A549 (cell line): ENCODE measurements at regions of chr7 and their contacts with region 1.

Region 1: GRCh38 chr7:73828107-73828803 is 2.5 kb upstream of the CLDN4 start:
- DNase-seq: peak; percentile 67 to 86
- ATAC-seq: peak; percentile 76 to 79
- H3K4me3 ChIP-seq: no peak overlapping the region
- H3K27ac ChIP-seq: peak overlapping the region; percentile 67 to 86
- H3K4me1 ChIP-seq: peaks cover 65% of the 10 kb centered on the region
- CTCF ChIP-seq: no peak
- EP300 ChIP-seq: no peak
- POLR2A ChIP-seq: no peak
- RAD21 ChIP-seq: no peak

Region 2: DNA sequence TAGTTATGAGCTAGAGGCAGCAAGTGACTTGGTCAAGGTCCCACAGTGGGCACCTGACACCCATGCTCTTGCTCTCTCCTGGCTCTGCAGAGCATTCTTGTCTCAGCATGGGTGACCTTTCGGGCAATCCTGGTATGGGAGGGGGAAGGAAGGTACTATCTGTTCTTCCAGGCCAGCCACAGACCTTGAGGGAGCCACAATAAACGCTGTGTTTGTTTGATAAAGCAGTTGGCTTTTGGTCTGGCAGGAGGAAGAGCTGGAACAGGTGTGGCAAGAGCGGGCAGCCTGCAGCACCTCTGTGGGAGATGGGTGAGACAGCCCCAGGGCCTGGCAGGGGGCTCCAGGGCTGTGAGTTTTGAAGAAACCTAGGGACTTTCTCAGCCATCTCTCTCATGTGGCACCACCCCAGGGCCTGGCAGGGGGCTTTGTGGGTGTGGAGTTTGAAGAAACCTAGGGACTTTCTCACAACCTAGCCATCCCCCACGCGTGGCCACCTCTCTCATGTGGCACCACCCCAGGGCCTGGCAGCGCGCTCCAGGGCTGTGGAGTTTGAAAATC is 69.6 kb before region 1 on chr7:
- CTCF ChIA-PET with region 1: no interaction called
- POLR2A ChIA-PET with region 1: no interaction called
- DNase-seq: no peak
- ATAC-seq: peak in 1 of 2 experiments; percentile 19; a peak in 2 of 6 replicates
- H3K4me3 ChIP-seq: no peak overlapping the region
- H3K27ac ChIP-seq: no peak overlapping the region
- H3K4me1 ChIP-seq: peaks cover 10% of the 10 kb centered on the region
- CTCF ChIP-seq: no peak
- EP300 ChIP-seq: no peak
- POLR2A ChIP-seq: no peak
- RAD21 ChIP-seq: no peak

Region 3: DNA sequence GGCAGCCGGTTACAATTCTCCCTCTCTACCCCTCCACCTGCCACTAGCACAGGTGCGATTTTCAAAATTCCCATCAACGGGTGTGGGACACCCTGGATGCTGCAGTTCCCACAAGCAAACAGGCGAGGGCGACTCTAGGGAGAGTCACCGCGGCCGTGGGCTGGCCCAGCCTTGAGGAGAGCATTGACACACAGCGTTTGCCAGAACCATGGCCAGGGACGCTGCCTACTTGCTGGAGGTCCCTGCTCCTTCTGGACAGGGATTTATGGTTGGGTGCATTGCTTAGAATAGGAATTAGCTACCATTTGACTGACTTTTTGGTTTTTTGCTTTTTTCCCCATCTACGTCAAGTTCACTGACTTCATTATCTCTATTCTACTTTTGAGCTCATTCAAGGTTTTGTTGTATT is 16.5 kb before region 1 on chr7:
- CTCF ChIA-PET with region 1: interaction called, 28 read pairs
- POLR2A ChIA-PET with region 1: no interaction called
- DNase-seq: peak; percentile 67 to 72
- ATAC-seq: peak; percentile 93 to 97
- H3K4me3 ChIP-seq: no peak overlapping the region
- H3K27ac ChIP-seq: no peak overlapping the region
- H3K4me1 ChIP-seq: peaks cover 7% of the 10 kb centered on the region; the same call in 2 of the 3 replicates
- CTCF ChIP-seq: peak; percentile 59
- EP300 ChIP-seq: no peak
- POLR2A ChIP-seq: no peak
- RAD21 ChIP-seq: peak; percentile 63 to 72

Region 4: DNA sequence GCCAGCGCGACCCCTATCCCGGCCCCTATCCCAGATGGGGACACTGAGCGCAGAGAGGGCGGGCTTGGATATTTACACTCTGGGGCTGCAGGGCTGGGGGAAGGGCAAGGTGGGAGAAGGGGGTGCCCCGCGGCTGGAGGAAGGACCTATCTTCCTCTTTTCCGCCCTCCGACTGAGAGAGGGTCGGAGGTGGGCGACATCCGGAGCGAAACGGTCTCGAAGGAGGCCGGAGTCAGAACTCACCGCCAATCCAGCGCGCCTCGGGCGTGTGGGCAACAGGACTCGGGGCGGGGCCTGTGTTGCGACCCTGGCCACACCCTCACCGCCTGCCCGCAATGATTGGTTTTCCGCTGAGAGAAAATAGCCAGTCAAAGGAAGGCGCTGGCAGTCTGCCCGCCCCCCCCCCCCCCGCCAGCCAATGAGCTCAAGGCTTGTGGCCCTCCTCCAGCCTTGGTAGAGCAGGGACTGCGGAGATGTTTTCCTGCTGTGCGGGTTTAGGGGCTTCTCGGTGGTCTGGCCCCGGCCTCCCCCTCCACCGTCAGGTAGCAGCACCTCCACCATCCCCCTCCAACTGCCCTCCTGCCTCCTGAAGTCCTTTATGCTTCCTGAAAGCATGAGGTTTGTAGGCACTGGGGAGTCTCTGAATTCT is 14.1 kb after region 1 on chr7 and contains the start of gene METTL27:
- CTCF ChIA-PET with region 1: interaction called, 9 read pairs
- POLR2A ChIA-PET with region 1: interaction called, 21 read pairs
- DNase-seq: peak; percentile 92 to 98
- ATAC-seq: peak; percentile 93 to 96
- H3K4me3 ChIP-seq: peak within 1 kb of the TSS; percentile 76
- H3K27ac ChIP-seq: peak within 1 kb of the TSS; percentile 87 to 92
- H3K4me1 ChIP-seq: peaks cover 8% of the 10 kb centered on the region; the same call in 1 of the 3 replicates
- CTCF ChIP-seq: no peak
- EP300 ChIP-seq: no peak
- POLR2A ChIP-seq: peak; percentile 67
- RAD21 ChIP-seq: no peak
- polyA plus RNA-seq, gene METTL27: 4.1 and 5.5 TPM in 2 replicates

Region 5: DNA sequence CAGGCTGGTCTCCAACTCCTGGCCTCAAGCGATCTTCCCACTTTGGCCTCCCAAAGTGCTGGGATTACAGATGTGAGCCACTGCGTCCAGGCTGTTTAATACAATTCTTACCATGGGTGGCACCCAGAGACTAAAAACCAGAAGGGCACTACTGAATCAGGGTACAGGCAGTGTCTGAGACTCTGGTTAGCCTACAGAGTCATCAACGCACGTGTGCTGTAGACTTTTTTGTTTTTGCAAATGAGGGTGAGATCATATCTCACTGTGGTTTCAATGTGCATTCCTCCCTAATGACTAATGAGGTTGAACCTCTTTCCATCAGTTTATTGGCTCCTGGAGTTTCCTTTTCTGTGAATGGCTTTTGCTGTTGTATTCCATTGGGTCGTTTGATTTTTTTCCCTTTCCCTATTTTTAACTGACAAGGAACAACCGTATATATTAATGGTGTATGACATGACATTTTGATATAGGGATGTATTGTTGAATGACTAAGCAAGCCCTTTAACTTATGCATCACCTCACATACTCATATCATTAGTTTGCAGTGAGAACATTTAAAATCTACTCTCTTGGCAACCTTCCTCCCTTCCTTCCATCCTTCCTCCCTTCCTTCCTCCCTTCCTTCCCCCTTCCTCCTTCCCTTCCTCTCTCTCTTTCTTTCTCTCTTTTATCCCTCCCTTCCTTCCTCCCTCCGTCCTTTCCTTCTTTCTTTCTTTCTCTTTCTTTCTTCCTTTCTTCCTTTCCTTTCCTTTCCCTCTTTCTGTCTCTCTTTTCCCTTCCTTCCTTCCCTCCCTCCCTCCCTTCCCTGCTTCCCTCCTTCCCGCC is 23.4 kb after region 1 on chr7:
- CTCF ChIA-PET with region 1: interaction called, 30 read pairs
- POLR2A ChIA-PET with region 1: interaction called, 8 read pairs
- DNase-seq: peak; percentile 62 to 79
- ATAC-seq: peak; percentile 65 to 74
- H3K4me3 ChIP-seq: no peak overlapping the region
- H3K27ac ChIP-seq: peak overlapping the region; percentile 73 to 83
- H3K4me1 ChIP-seq: peaks cover 36% of the 10 kb centered on the region
- CTCF ChIP-seq: no peak
- EP300 ChIP-seq: no peak
- POLR2A ChIP-seq: no peak
- RAD21 ChIP-seq: no peak